CD4-positive, alpha-beta memory T cell (primary cell): ENCODE measurements at regions of chr4 and their contacts with region 1.

Region 1: DNA sequence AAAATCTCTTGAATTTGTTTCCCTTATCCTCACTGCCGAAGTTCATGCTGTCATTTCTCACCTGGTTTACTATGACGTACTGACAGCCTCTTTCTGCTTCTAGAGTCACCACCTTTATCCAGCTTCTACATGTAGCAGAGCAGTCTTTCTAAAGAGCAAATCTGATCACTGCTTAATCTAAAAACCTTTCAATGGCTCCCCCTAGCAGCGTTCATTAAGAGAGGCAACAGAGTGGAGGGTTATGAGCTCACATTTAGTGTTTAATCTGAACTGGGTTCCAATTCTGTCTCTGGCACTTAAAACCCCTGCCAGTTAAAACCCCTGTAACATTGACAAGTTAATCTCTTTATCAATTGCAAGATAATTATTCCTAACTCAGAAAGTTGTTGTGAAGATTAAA is 4.4 kb downstream of the RBPJ start:
- DNase-seq: peak; percentile 50 to 59 (median 56)
- H3K4me3 ChIP-seq: no peak overlapping the region
- H3K4me3 Mint-ChIP-seq: peak overlapping the region; percentile 4 to 55 (median 23)
- H3K27ac ChIP-seq: no peak overlapping the region
- H3K27ac Mint-ChIP-seq: peak overlapping the region; percentile 49 to 81 (median 75)
- H3K4me1 ChIP-seq: peaks cover 43% of the 10 kb centered on the region
- H3K4me1 Mint-ChIP-seq: peaks cover 38 to 54% (median 44%) of the 10 kb centered on the region in 4 donors
- H3K27me3 ChIP-seq: no peaks in the 10 kb centered on the region
- H3K27me3 Mint-ChIP-seq: no peaks in the 10 kb centered on the region

Region 2: GRCh38 chr4:24529555-24529954 is 1795.6 kb before region 1 on chr4:
- CTCF ChIA-PET with region 1: no interaction called
- POLR2A ChIA-PET with region 1: no interaction called
- intact Hi-C with region 1: no loop called
- DNase-seq: no peak
- H3K4me3 ChIP-seq: no peak overlapping the region
- H3K4me3 Mint-ChIP-seq: no peak overlapping the region
- H3K27ac ChIP-seq: no peak overlapping the region
- H3K27ac Mint-ChIP-seq: no peak overlapping the region
- H3K4me1 ChIP-seq: no peaks in the 10 kb centered on the region
- H3K4me1 Mint-ChIP-seq: peaks cover 0 to 3% (median under 1%) of the 10 kb centered on the region in 4 donors
- H3K27me3 ChIP-seq: no peaks in the 10 kb centered on the region
- H3K27me3 Mint-ChIP-seq: no peaks in the 10 kb centered on the region

Region 3: GRCh38 chr4:25842229-25842845 is 482.9 kb before region 1 on chr4:
- CTCF ChIA-PET with region 1: interaction called, 4 read pairs
- POLR2A ChIA-PET with region 1: no interaction called
- intact Hi-C with region 1: loop called (anchors 5 kb)
- DNase-seq: peak in 3 of 5 donors; percentile 36 to 41 (median 41)
- H3K4me3 ChIP-seq: no peak overlapping the region
- H3K4me3 Mint-ChIP-seq: peak overlapping the region in 4 of 8 donors; percentile 18 to 63 (median 30)
- H3K27ac ChIP-seq: no peak overlapping the region
- H3K27ac Mint-ChIP-seq: peak overlapping the region in 6 of 7 donors; percentile 13 to 84 (median 48)
- H3K4me1 ChIP-seq: peaks cover 28% of the 10 kb centered on the region
- H3K4me1 Mint-ChIP-seq: peaks cover 33 to 74% (median 46%) of the 10 kb centered on the region in 4 donors
- H3K27me3 ChIP-seq: no peaks in the 10 kb centered on the region
- H3K27me3 Mint-ChIP-seq: no peaks in the 10 kb centered on the region

Region 4: DNA sequence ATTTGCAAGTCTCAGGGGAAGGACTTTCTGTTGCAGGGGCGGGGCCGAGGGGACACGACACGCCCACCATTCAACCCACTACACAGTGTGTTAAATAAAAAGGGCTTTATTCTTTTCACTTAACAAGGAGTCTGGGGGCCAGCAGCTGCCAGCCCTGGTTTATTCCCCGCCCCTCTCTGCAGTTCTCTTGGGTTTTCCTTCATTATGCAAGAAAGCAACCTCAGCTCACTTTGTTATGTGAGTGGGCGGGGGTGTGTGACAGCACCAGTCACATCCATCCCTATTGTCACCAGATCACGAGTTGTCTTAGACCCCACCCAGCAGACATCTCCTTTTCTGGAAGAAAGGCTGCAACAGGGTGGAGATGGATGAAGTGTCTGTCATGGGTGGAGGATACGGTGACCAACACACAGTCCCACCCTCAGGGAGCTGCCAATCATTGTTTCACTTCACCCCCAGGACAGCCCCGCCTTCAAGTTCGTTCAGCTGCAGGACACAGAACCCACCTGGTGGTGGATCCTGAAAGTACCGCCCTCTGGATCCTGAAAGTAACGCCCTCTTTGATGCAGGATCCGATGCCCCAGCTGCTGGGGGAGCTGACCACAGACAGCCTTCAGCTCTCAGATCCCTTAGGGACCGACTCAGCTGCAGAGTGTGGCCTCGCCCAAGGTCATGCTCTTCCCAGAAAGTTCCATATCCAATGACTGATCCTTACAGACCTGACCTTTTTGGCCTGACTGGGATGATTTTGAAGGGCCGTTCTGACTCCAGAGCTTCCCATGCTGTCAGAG is 331.6 kb before region 1 on chr4:
- CTCF ChIA-PET with region 1: interaction called, 85 read pairs
- POLR2A ChIA-PET with region 1: no interaction called
- intact Hi-C with region 1: loop called (anchors 1 kb)
- DNase-seq: no peak
- H3K4me3 ChIP-seq: no peak overlapping the region
- H3K4me3 Mint-ChIP-seq: no peak overlapping the region
- H3K27ac ChIP-seq: no peak overlapping the region
- H3K27ac Mint-ChIP-seq: no peak overlapping the region
- H3K4me1 ChIP-seq: no peaks in the 10 kb centered on the region
- H3K4me1 Mint-ChIP-seq: peaks cover 1 to 8% (median 3%) of the 10 kb centered on the region in 4 donors
- H3K27me3 ChIP-seq: no peaks in the 10 kb centered on the region
- H3K27me3 Mint-ChIP-seq: no peaks in the 10 kb centered on the region

Region 5: GRCh38 chr4:26061248-26061986 is 263.8 kb before region 1 on chr4:
- CTCF ChIA-PET with region 1: interaction called, 15 read pairs
- POLR2A ChIA-PET with region 1: no interaction called
- intact Hi-C with region 1: loop called (anchors 1 kb)
- DNase-seq: peak in 4 of 5 donors; percentile 15 to 26 (median 16)
- H3K4me3 ChIP-seq: no peak overlapping the region
- H3K4me3 Mint-ChIP-seq: no peak overlapping the region
- H3K27ac ChIP-seq: no peak overlapping the region
- H3K27ac Mint-ChIP-seq: no peak overlapping the region
- H3K4me1 ChIP-seq: no peaks in the 10 kb centered on the region
- H3K4me1 Mint-ChIP-seq: peaks cover 2 to 8% (median 7%) of the 10 kb centered on the region in 4 donors
- H3K27me3 ChIP-seq: no peaks in the 10 kb centered on the region
- H3K27me3 Mint-ChIP-seq: no peaks in the 10 kb centered on the region

Region 6: GRCh38 chr4:26197018-26197779 is 128.0 kb before region 1 on chr4:
- CTCF ChIA-PET with region 1: interaction called, 10 read pairs
- POLR2A ChIA-PET with region 1: interaction called, 26 read pairs
- intact Hi-C with region 1: no loop called
- DNase-seq: peak; percentile 55 to 88 (median 68)
- H3K4me3 ChIP-seq: peak overlapping the region; percentile 43
- H3K4me3 Mint-ChIP-seq: peak overlapping the region; percentile 72 to 88 (median 81)
- H3K27ac ChIP-seq: peak overlapping the region; percentile 27
- H3K27ac Mint-ChIP-seq: peak overlapping the region; percentile 88 to 96 (median 94)
- H3K4me1 ChIP-seq: peaks cover 52% of the 10 kb centered on the region
- H3K4me1 Mint-ChIP-seq: peaks cover 45 to 80% (median 70%) of the 10 kb centered on the region in 4 donors
- H3K27me3 ChIP-seq: no peaks in the 10 kb centered on the region
- H3K27me3 Mint-ChIP-seq: no peaks in the 10 kb centered on the region